H1 (cell line): ENCODE measurements at regions of chr1 and their contacts with region 1.

Region 1: DNA sequence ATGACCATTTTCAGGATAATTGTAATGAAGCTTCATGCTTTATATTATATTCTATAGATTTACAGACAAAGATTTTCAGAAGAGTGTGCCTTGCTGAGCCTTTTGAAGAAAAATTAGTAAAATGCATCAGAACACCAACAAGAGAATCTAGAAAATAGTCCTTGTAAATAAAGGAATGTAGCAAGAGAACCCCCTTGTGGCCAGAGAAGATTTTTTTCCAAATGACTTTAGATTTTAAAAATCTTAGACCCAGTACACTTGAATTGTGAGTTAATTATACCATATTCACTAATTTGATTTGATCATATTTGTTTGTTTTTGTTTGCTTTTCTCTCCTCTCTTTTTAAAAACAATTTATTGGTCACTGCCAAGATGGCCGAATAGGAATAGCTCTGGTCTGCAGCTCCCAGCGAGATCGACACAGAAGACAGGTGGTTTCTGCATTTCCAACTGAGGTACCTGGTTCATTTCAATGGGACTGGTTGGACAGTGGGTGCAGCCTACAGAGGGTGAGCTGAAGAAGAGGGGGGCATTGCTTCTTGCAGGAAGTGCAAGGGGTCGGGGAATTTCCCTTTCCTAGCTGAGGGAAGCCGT is 12.8 kb upstream of the IFI44L start:
- DNase-seq: no peak
- H3K4me3 ChIP-seq: no peak overlapping the region
- H3K27ac ChIP-seq: no peak overlapping the region
- H3K4me1 ChIP-seq: no peaks in the 10 kb centered on the region
- H3K27me3 ChIP-seq: no peaks in the 10 kb centered on the region
- CTCF ChIP-seq: peak in 2 of 3 experiments; percentile 28 to 38; a peak in 2 of 4 replicates
- EP300 ChIP-seq: no peak
- POLR2A ChIP-seq: no peak
- RAD21 ChIP-seq: peak; percentile 54 to 64

Region 2: GRCh38 chr1:78132174-78132947 is 475.1 kb before region 1 on chr1:
- CTCF ChIA-PET with region 1: interaction called, 47 read pairs
- POLR2A ChIA-PET with region 1: no interaction called
- DNase-seq: no peak
- H3K4me3 ChIP-seq: no peak overlapping the region
- H3K27ac ChIP-seq: no peak overlapping the region
- H3K4me1 ChIP-seq: no peaks in the 10 kb centered on the region
- H3K27me3 ChIP-seq: no peaks in the 10 kb centered on the region
- CTCF ChIP-seq: no peak
- EP300 ChIP-seq: no peak
- POLR2A ChIP-seq: no peak
- RAD21 ChIP-seq: no peak

Region 3: DNA sequence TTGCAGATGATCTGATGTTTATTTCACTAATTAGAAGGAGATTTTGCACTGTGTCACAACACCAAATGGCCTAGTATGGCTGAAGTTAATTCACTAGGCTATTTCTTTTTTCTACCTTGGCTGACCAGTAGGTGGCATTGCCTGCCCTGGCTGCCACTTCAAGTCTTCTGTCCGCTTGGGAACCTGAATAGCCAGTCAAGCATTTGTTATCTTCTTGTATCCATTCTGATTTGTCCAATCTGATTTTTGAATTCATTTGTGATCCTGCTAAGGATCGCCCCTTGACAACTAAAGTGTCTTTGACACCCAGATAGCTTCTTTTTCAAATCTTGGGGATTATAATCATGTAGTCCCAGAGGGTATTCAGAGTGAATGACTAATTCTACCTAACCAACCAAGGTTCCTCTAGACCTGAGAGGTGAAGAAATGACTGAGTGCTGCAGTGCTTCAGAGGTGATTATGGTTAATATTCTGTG is 462.3 kb before region 1 on chr1:
- CTCF ChIA-PET with region 1: interaction called, 32 read pairs
- POLR2A ChIA-PET with region 1: no interaction called
- DNase-seq: no peak
- H3K4me3 ChIP-seq: no peak overlapping the region
- H3K27ac ChIP-seq: no peak overlapping the region
- H3K4me1 ChIP-seq: no peaks in the 10 kb centered on the region
- H3K27me3 ChIP-seq: no peaks in the 10 kb centered on the region
- CTCF ChIP-seq: peak; percentile 70 to 85 (median 80)
- EP300 ChIP-seq: no peak
- POLR2A ChIP-seq: no peak
- RAD21 ChIP-seq: peak; percentile 97 to 98

Region 4: GRCh38 chr1:78333502-78333901 is 273.9 kb before region 1 on chr1:
- CTCF ChIA-PET with region 1: interaction called, 15 read pairs
- POLR2A ChIA-PET with region 1: no interaction called
- DNase-seq: no peak
- H3K4me3 ChIP-seq: no peak overlapping the region
- H3K27ac ChIP-seq: no peak overlapping the region
- H3K4me1 ChIP-seq: no peaks in the 10 kb centered on the region
- H3K27me3 ChIP-seq: no peaks in the 10 kb centered on the region
- CTCF ChIP-seq: peak; percentile 38 to 65 (median 57)
- EP300 ChIP-seq: no peak
- POLR2A ChIP-seq: no peak
- RAD21 ChIP-seq: peak; percentile 50 to 54

Region 5: GRCh38 chr1:78591971-78592370 is 15.5 kb before region 1 on chr1:
- CTCF ChIA-PET with region 1: interaction called, 13 read pairs
- POLR2A ChIA-PET with region 1: no interaction called
- DNase-seq: no peak
- H3K4me3 ChIP-seq: no peak overlapping the region
- H3K27ac ChIP-seq: no peak overlapping the region
- H3K4me1 ChIP-seq: no peaks in the 10 kb centered on the region; a peak in 1 of 7 replicates
- H3K27me3 ChIP-seq: no peaks in the 10 kb centered on the region
- CTCF ChIP-seq: no peak
- EP300 ChIP-seq: no peak
- POLR2A ChIP-seq: no peak
- RAD21 ChIP-seq: no peak

Region 6: DNA sequence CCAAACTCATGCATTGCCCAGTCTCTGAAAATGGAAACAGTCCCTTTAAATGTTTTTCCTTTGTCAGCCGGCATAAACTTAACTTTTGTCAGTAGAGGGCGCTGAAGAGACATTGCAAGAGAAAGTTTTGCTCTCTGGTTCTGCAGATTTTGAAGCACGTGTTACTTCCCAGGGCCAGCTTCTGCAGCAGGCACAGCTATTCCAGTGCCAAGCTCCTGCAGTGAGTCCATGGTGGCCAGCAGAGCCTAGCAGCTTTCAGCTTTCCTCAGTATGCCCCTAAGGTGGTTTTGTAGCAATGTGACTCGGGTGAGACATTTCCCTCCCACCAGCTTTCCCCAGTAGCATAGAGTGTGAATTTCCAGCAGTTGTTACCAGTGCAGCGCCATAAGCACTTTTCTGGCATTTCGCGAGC is 10.2 kb after region 1 on chr1:
- CTCF ChIA-PET with region 1: interaction called, 22 read pairs
- POLR2A ChIA-PET with region 1: no interaction called
- DNase-seq: peak; percentile 13 to 54
- H3K4me3 ChIP-seq: no peak overlapping the region
- H3K27ac ChIP-seq: no peak overlapping the region
- H3K4me1 ChIP-seq: no peaks in the 10 kb centered on the region
- H3K27me3 ChIP-seq: no peaks in the 10 kb centered on the region
- CTCF ChIP-seq: peak in 2 of 3 experiments; percentile 73 to 81; a peak in 3 of 4 replicates
- EP300 ChIP-seq: no peak
- POLR2A ChIP-seq: no peak
- RAD21 ChIP-seq: peak; percentile 78 to 84

Region 7: GRCh38 chr1:78676347-78676982 is 69.0 kb after region 1 on chr1:
- CTCF ChIA-PET with region 1: interaction called, 20 read pairs
- POLR2A ChIA-PET with region 1: no interaction called
- DNase-seq: no peak
- H3K4me3 ChIP-seq: no peak overlapping the region
- H3K27ac ChIP-seq: no peak overlapping the region
- H3K4me1 ChIP-seq: no peaks in the 10 kb centered on the region
- H3K27me3 ChIP-seq: no peaks in the 10 kb centered on the region
- CTCF ChIP-seq: peak in 2 of 3 experiments; percentile 35 to 60; a peak in 2 of 4 replicates
- EP300 ChIP-seq: no peak
- POLR2A ChIP-seq: no peak
- RAD21 ChIP-seq: peak; percentile 62 to 68